ENCODE measurements at regions of chr1 and their contacts with region 1.

Region 1: GRCh38 chr1:50929376-50929958 is 30.6 kb downstream of the FAF1 start:
- DNase-seq: peak; percentile 27
- H3K4me3 ChIP-seq: no peak overlapping the region
- H3K27ac ChIP-seq: no peak overlapping the region
- H3K4me1 ChIP-seq: no peaks in the 10 kb centered on the region
- H3K27me3 ChIP-seq: no peaks in the 10 kb centered on the region
- CTCF ChIP-seq: peak; percentile 74
- EP300 ChIP-seq: no peak
- RAD21 ChIP-seq: peak; percentile 69

Region 2: DNA sequence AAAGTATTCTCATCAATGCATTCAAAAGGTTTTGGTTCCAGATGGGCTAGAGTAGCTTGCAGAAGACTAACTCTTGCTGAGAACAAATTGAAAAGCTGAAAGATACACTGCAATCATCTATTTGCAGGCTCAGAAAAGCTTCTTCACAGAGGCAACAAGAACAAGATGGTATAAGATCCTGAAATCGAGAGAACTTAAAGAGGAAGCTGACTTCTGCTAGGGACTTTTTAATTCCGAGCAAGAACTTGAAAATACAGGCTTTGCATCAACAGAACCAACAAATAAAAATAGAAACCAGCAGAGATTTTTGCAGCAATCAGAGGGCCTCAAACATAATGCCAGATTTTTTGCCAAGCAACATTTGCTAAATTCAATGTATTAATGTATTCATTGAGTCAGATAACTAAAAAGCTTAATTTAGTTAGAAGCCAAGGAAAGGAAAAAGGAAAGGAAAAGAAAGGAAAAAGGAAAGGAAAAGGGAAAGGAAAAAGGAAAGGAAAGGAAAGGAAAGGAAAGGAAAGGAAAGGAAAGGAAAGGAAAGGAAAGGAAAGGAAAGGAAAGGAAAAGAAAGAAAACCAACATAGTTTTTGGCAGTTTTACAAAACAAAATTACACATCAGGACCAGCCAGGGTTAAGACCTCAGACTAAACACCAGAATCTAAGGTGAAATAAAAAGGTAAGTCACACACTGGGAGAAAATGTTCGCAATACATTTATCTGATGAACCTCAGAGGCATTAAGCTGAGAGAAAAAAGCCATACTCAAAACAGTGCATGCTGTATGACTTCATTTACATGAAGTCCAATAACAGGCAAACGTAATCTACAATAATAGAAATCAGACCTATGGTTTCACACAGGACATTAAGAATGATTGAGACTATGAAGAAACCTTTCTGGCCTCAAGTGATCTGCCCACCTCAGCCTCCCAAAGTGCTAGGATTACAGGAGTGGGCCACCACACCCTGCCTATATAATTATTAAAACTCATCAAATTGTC is 12.0 kb before region 1 on chr1:
- CTCF ChIA-PET with region 1: interaction called, 13 read pairs
- POLR2A ChIA-PET with region 1: no interaction called
- DNase-seq: no peak
- H3K4me3 ChIP-seq: no peak overlapping the region
- H3K27ac ChIP-seq: no peak overlapping the region
- H3K4me1 ChIP-seq: no peaks in the 10 kb centered on the region
- H3K27me3 ChIP-seq: no peaks in the 10 kb centered on the region
- CTCF ChIP-seq: no peak
- EP300 ChIP-seq: no peak
- RAD21 ChIP-seq: no peak

Region 3: DNA sequence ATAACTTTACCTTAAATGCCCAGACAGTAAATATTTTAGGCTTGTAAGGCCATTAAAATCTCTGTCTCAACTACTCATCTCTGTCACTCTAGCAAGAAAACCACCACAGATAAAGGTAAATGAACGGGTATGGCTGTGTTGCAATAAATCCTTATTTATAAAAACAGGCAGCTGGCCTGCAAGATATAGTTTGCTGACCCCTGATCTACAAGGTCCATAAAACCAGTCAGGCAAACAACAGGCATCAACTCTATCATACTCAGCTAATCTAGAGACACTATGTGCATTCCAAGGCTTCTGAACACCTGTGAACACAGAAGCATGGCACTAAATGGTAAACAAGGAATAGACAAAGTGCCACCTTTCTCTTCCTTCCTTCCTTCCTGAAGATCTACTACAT is 20.9 kb after region 1 on chr1:
- CTCF ChIA-PET with region 1: interaction called, 43 read pairs
- POLR2A ChIA-PET with region 1: no interaction called
- DNase-seq: no peak
- H3K4me3 ChIP-seq: no peak overlapping the region
- H3K27ac ChIP-seq: no peak overlapping the region
- H3K4me1 ChIP-seq: no peaks in the 10 kb centered on the region; a peak in 2 of 4 replicates
- H3K27me3 ChIP-seq: no peaks in the 10 kb centered on the region
- CTCF ChIP-seq: no peak
- EP300 ChIP-seq: no peak
- RAD21 ChIP-seq: no peak

Region 4: GRCh38 chr1:50968158-50968820 is 38.8 kb after region 1 on chr1:
- CTCF ChIA-PET with region 1: interaction called, 23 read pairs
- POLR2A ChIA-PET with region 1: no interaction called
- DNase-seq: peak; percentile 96
- H3K4me3 ChIP-seq: peak overlapping the region; percentile 96
- H3K27ac ChIP-seq: peak overlapping the region; percentile 95
- H3K4me1 ChIP-seq: peaks cover 0 to 4% of the 10 kb centered on the region in 2 experiments; a peak in 1 of 4 replicates
- H3K27me3 ChIP-seq: no peaks in the 10 kb centered on the region
- CTCF ChIP-seq: peak; percentile 45; the same call in 1 of the 2 replicates
- EP300 ChIP-seq: peak in 1 of 2 experiments; percentile 31; a peak in 1 of 4 replicates
- RAD21 ChIP-seq: peak; percentile 35

Region 5: GRCh38 chr1:51192213-51192843 is 262.9 kb after region 1 on chr1:
- CTCF ChIA-PET with region 1: interaction called, 28 read pairs
- POLR2A ChIA-PET with region 1: no interaction called
- DNase-seq: peak; percentile 41
- H3K4me3 ChIP-seq: no peak overlapping the region; a peak in 1 of 4 replicates
- H3K27ac ChIP-seq: no peak overlapping the region
- H3K4me1 ChIP-seq: no peaks in the 10 kb centered on the region
- H3K27me3 ChIP-seq: no peaks in the 10 kb centered on the region
- CTCF ChIP-seq: peak; percentile 82
- EP300 ChIP-seq: no peak
- RAD21 ChIP-seq: peak; percentile 65

Region 6: DNA sequence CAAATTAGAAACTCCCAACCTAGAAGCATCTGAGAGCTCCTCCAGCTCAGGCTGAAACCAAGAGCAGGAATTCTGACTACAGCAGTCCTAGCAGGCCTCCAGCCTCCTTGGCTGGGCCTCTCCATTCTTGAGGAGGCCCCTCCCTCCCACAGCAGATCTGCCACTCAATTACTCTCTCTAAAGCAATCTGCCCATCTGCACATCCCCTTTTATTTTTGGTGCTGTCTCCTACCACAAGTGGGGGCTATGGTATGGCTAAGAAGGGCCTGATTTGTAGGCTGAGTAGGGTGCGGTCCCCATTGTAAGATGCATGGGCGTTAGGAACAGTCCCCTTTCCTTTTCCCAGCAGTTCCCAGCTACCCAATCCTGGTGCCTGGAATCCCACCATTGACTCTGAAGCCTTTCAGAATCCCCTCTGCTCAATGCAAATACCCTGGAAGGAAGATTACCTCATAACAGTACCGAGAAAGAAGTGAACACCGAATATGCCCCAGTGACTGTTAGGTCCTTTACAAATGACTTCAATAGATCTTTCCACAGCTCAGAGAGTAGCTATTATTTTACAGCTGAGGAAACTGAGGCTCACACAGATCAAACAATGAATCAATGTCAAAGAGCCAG is 412.5 kb after region 1 on chr1:
- CTCF ChIA-PET with region 1: no interaction called
- POLR2A ChIA-PET with region 1: no interaction called
- DNase-seq: no peak
- H3K4me3 ChIP-seq: no peak overlapping the region
- H3K27ac ChIP-seq: no peak overlapping the region
- H3K4me1 ChIP-seq: peaks cover 0 to 6% of the 10 kb centered on the region in 2 experiments; a peak in 1 of 4 replicates
- H3K27me3 ChIP-seq: no peaks in the 10 kb centered on the region
- CTCF ChIP-seq: no peak
- EP300 ChIP-seq: no peak
- RAD21 ChIP-seq: no peak